ENCODE measurements at regions of chr1 and their contacts with region 1.

Region 1: GRCh38 chr1:46223472-46223943 is 20.4 kb downstream of the LURAP1 start:
- DNase-seq: peak; percentile 93
- ATAC-seq: peak; percentile 98
- H3K4me3 ChIP-seq: no peak overlapping the region
- H3K27ac ChIP-seq: no peak overlapping the region
- H3K4me1 ChIP-seq: peaks cover 1% of the 10 kb centered on the region; the same call in 1 of the 2 replicates
- H3K27me3 ChIP-seq: no peaks in the 10 kb centered on the region
- CTCF ChIP-seq: peak; percentile 91
- POLR2A ChIP-seq: no peak
- RAD21 ChIP-seq: peak; percentile 88

Region 2: GRCh38 chr1:46203738-46204405 is 19.6 kb before region 1 on chr1:
- CTCF ChIA-PET with region 1: interaction called, 10 read pairs
- POLR2A ChIA-PET with region 1: no interaction called
- dilution Hi-C with region 1: no loop called
- in situ Hi-C with region 1: no loop called
- intact Hi-C with region 1: no loop called
- DNase-seq: no peak
- ATAC-seq: peak; percentile 6
- H3K4me3 ChIP-seq: peak overlapping the region; percentile 51
- H3K27ac ChIP-seq: no peak overlapping the region; the same call in 1 of the 2 replicates
- H3K4me1 ChIP-seq: no peaks in the 10 kb centered on the region
- H3K27me3 ChIP-seq: no peaks in the 10 kb centered on the region
- CTCF ChIP-seq: no peak
- POLR2A ChIP-seq: no peak
- RAD21 ChIP-seq: no peak

Measured in IMR-90 (cell line).